ENCODE measurements at regions of chr11 and their contacts with region 1.

Region 1: GRCh38 chr11:86218125-86219084 is 26.1 kb upstream of the EED start:
- DNase-seq: peak; percentile 89
- H3K4me3 Mint-ChIP-seq: peak overlapping the region; percentile 70
- H3K27ac Mint-ChIP-seq: peak overlapping the region; percentile 84
- H3K4me1 Mint-ChIP-seq: peaks cover 59% of the 10 kb centered on the region
- H3K27me3 Mint-ChIP-seq: no peaks in the 10 kb centered on the region

Region 2: DNA sequence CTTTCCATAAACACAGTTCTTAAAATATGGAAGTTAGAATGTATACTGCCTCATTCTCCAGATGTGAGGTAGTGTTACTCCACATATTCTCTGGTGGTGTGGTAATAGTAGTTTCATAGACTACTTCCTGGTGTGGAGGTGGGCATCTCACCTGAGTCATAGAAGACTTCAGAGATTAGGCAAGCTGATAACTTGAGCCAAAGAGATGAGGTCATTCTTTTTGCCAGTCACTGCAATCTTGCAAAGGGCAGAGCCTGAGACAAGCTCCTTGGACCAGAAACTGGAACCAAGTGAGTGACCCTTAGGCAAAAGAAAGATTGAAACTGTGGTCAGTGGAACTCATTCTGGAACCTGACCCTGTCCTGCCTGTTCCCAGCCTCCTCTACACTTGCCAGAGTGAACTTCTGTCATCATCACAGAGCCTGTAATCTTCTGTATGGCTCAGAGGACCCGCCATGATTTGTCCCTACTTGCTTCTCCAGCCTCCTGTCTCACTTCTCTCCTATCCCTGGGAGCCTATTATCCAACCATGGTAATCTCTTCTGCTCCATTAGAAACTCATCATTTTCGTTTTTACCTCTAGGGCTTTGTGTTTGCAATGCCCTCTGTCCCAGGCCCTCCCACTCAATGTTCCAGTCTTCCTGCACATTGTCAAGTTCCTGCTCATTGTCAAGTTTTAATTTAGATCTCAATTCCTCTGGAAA is 373.8 kb before region 1 on chr11:
- intact Hi-C with region 1: no loop called
- DNase-seq: no peak
- H3K4me3 Mint-ChIP-seq: no peak overlapping the region
- H3K27ac Mint-ChIP-seq: no peak overlapping the region
- H3K4me1 Mint-ChIP-seq: peaks cover 20% of the 10 kb centered on the region
- H3K27me3 Mint-ChIP-seq: peaks cover 2% of the 10 kb centered on the region

Region 3: DNA sequence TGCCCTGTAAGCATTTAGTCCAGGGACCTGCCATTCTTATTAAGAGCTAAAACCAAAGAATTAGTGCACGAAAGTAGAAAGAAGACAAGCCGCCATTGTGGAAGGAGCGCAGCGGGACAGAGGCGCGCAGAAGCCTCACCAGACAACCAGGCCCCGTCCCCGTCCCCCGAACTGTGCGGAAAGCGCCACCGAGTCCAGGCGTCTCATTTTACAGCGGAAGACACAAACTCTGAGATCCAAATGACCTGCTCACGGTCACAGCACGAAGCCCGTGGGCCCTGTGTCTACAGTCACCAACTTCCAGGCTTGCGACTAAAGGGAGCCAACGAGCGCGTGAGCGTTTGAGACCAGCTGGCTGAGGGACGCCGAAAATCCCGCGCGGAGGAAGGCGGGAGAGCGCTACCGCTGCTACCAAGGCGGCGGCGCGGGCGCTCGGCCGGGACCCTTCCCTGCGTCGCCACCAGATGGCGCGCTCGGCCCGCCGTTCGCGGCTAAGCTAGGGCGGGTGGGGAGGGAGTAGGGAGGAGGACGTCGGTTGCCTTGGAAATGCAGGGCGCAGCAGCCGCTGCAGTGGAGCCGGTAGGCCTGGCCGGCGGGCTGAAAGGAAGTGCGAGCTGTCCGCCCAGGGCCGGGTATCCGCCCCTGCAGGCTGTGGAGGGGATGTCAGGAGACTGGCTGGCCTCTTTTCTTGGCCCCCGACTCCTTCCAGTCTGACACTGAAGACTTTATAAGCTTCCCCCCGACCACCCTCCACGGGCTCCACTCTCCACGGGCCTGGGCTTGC is 363.7 kb before region 1 on chr11:
- intact Hi-C with region 1: loop called (anchors 10 kb)
- DNase-seq: peak; percentile 98
- H3K4me3 Mint-ChIP-seq: peak overlapping the region; percentile 94
- H3K27ac Mint-ChIP-seq: peak overlapping the region; percentile 96
- H3K4me1 Mint-ChIP-seq: peaks cover 11% of the 10 kb centered on the region
- H3K27me3 Mint-ChIP-seq: no peaks in the 10 kb centered on the region

Region 4: DNA sequence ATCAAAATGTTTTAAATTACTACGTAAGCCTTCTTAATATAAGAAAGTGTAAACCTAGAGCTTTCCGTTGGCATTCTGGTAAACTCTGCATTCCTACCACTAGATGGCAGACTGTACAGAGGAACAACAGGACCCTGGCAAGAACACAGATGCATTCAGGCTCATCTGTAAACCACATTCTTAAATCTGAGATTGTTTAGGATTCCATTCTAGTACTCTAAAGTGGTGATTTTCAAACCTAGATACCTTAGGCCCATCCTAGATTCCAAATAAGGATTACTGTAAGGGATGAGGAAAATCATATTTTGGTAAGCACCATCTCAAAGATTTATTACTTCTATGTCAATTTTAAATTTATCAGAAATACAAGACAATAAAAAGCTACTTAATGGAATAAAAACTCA is 176.4 kb before region 1 on chr11:
- intact Hi-C with region 1: loop called (anchors 1 kb)
- DNase-seq: peak; percentile 88
- H3K4me3 Mint-ChIP-seq: peak overlapping the region; percentile 45
- H3K27ac Mint-ChIP-seq: peak overlapping the region; percentile 73
- H3K4me1 Mint-ChIP-seq: peaks cover 57% of the 10 kb centered on the region
- H3K27me3 Mint-ChIP-seq: no peaks in the 10 kb centered on the region

Region 5: GRCh38 chr11:86068951-86069407 is 149.4 kb before region 1 on chr11 and contains the start of gene PICALM:
- intact Hi-C with region 1: loop called (anchors 1 kb)
- DNase-seq: peak; percentile 99
- H3K4me3 Mint-ChIP-seq: peak within 1 kb of the TSS; percentile 100
- H3K27ac Mint-ChIP-seq: peak within 1 kb of the TSS; percentile 97
- H3K4me1 Mint-ChIP-seq: peaks cover 33% of the 10 kb centered on the region
- H3K27me3 Mint-ChIP-seq: no peaks in the 10 kb centered on the region
- total RNA-seq, gene PICALM: 141 and 156 TPM in 2 replicates

Region 6: GRCh38 chr11:86182976-86183584 is 35.3 kb before region 1 on chr11:
- intact Hi-C with region 1: loop called (anchors 2 kb)
- DNase-seq: peak; percentile 83
- H3K4me3 Mint-ChIP-seq: no peak overlapping the region
- H3K27ac Mint-ChIP-seq: no peak overlapping the region
- H3K4me1 Mint-ChIP-seq: peaks cover 17% of the 10 kb centered on the region
- H3K27me3 Mint-ChIP-seq: no peaks in the 10 kb centered on the region

Region 7: GRCh38 chr11:86230921-86231430 is 12.6 kb after region 1 on chr11:
- intact Hi-C with region 1: loop called (anchors 1 kb)
- DNase-seq: peak; percentile 53
- H3K4me3 Mint-ChIP-seq: no peak overlapping the region
- H3K27ac Mint-ChIP-seq: peak overlapping the region; percentile 73
- H3K4me1 Mint-ChIP-seq: peaks cover 46% of the 10 kb centered on the region
- H3K27me3 Mint-ChIP-seq: peaks cover 2% of the 10 kb centered on the region

Region 8: DNA sequence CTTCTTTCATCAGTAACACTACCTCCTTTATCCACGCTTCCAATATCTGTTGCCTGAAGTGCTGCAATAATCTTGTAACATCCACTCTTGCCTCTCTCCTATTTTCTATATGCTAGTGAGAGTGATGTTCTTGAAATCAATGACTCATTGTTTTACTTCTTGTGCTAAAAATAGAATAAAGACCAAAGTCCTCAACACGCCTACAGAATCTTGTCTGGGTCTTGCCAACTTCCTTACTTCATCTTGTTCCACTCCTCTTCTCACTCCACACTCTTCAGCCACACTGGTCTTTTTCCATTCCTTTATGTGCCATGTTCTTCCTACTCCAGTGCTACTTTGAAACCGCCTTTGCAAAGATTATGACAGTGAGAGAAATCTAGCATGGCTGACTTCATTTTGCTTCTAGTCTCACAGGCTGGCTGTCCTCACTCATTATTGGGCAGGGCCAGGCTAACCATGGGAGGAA is 292.7 kb after region 1 on chr11:
- intact Hi-C with region 1: loop called (anchors 10 kb)
- DNase-seq: no peak
- H3K4me3 Mint-ChIP-seq: no peak overlapping the region
- H3K27ac Mint-ChIP-seq: no peak overlapping the region
- H3K4me1 Mint-ChIP-seq: no peaks in the 10 kb centered on the region
- H3K27me3 Mint-ChIP-seq: peaks cover under 1% of the 10 kb centered on the region